B cell (primary cell): ENCODE measurements at regions of chrX and their contacts with region 1.

Region 1: GRCh38 chrX:72126539-72127140 is 5.1 kb downstream of the RTL5 start:
- DNase-seq: peak; percentile 80
- ATAC-seq: peak; percentile 62
- H3K4me3 ChIP-seq: no peak overlapping the region
- H3K4me3 Mint-ChIP-seq: no peak overlapping the region
- H3K27ac ChIP-seq: no peak overlapping the region
- H3K27ac Mint-ChIP-seq: peak overlapping the region; percentile 21
- H3K4me1 ChIP-seq: peaks cover 12 to 27% of the 10 kb centered on the region in 2 donors
- H3K4me1 Mint-ChIP-seq: peaks cover 34% of the 10 kb centered on the region
- H3K27me3 ChIP-seq: peaks cover 0 to 5% (median 2%) of the 10 kb centered on the region in 4 experiments
- H3K27me3 Mint-ChIP-seq: peaks cover 4% of the 10 kb centered on the region
- CTCF ChIP-seq: peak; percentile 70

Region 2: DNA sequence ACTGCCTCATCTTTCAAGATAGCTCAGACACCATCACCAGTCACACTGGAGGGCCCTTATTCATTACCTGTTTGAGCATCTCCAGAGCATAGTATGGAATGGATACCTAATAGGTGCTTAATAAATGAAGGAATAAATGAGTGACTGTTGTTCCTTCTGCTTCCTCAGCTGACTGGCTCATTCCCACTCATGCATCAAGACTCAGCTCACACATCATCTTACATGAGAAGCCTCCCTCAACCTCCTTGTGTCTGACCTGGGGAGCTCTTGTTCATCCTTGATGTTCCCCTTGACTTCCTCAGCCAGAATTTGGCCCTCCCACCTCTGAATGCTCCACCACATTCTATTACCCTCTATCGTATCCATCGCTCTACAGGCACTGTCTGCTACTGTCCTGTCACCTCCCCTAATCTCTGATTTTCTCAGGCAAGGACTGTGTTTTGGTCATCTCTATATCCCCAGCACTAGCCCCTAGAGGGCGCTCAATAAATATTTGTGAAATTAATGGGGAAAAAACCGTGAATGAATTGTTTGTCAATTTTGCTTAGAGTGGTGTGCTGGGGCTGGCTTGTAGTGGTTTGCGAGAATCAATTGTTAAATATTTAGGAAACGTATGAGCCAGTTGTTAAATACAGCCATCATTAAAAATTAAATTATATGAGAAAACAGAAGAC is 127.7 kb before region 1 on chrX:
- CTCF ChIA-PET with region 1: interaction called, 83 read pairs
- POLR2A ChIA-PET with region 1: interaction called, 3 read pairs
- intact Hi-C with region 1: loop called (anchors 1 kb)
- DNase-seq: peak; percentile 52
- ATAC-seq: peak; percentile 51
- H3K4me3 ChIP-seq: no peak overlapping the region
- H3K4me3 Mint-ChIP-seq: no peak overlapping the region
- H3K27ac ChIP-seq: no peak overlapping the region
- H3K27ac Mint-ChIP-seq: no peak overlapping the region
- H3K4me1 ChIP-seq: no peaks in the 10 kb centered on the region
- H3K4me1 Mint-ChIP-seq: no peaks in the 10 kb centered on the region
- H3K27me3 ChIP-seq: no peaks in the 10 kb centered on the region
- H3K27me3 Mint-ChIP-seq: peaks cover 3% of the 10 kb centered on the region
- CTCF ChIP-seq: peak; percentile 74

Region 3: GRCh38 chrX:72048968-72049367 is 77.7 kb before region 1 on chrX:
- CTCF ChIA-PET with region 1: interaction called, 6 read pairs
- POLR2A ChIA-PET with region 1: no interaction called
- intact Hi-C with region 1: loop called (anchors 1 kb)
- DNase-seq: peak; percentile 22
- ATAC-seq: no peak
- H3K4me3 ChIP-seq: no peak overlapping the region
- H3K4me3 Mint-ChIP-seq: no peak overlapping the region
- H3K27ac ChIP-seq: no peak overlapping the region
- H3K27ac Mint-ChIP-seq: no peak overlapping the region
- H3K4me1 ChIP-seq: no peaks in the 10 kb centered on the region
- H3K4me1 Mint-ChIP-seq: no peaks in the 10 kb centered on the region
- H3K27me3 ChIP-seq: no peaks in the 10 kb centered on the region
- H3K27me3 Mint-ChIP-seq: no peaks in the 10 kb centered on the region
- CTCF ChIP-seq: no peak

Region 4: DNA sequence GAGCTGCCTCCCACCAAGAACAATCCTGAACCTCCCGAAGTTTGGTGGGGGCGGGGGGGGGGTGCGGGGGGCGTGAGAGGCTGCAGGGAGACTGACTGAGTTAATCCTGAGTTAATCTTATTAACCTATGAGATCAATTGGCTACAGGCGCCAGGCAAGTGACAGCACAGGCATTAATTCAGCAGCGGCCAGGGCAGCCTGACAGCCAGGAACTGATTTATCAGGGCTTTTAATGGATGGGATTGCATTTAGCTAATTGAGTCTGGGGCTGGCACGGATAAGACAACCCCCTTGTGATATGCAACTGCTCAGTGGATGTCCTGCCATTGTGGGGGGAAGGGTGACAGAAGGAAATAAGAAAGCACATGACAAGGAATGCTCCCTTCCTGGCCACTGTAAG is 11.3 kb before region 1 on chrX:
- CTCF ChIA-PET with region 1: interaction called, 20 read pairs
- POLR2A ChIA-PET with region 1: no interaction called
- intact Hi-C with region 1: no loop called
- DNase-seq: no peak
- ATAC-seq: no peak
- H3K4me3 ChIP-seq: no peak overlapping the region
- H3K4me3 Mint-ChIP-seq: no peak overlapping the region
- H3K27ac ChIP-seq: no peak overlapping the region
- H3K27ac Mint-ChIP-seq: no peak overlapping the region
- H3K4me1 ChIP-seq: peaks cover 0 to 5% of the 10 kb centered on the region in 2 donors
- H3K4me1 Mint-ChIP-seq: peaks cover 3% of the 10 kb centered on the region
- H3K27me3 ChIP-seq: no peaks in the 10 kb centered on the region
- H3K27me3 Mint-ChIP-seq: peaks cover 11% of the 10 kb centered on the region
- CTCF ChIP-seq: no peak

Region 5: DNA sequence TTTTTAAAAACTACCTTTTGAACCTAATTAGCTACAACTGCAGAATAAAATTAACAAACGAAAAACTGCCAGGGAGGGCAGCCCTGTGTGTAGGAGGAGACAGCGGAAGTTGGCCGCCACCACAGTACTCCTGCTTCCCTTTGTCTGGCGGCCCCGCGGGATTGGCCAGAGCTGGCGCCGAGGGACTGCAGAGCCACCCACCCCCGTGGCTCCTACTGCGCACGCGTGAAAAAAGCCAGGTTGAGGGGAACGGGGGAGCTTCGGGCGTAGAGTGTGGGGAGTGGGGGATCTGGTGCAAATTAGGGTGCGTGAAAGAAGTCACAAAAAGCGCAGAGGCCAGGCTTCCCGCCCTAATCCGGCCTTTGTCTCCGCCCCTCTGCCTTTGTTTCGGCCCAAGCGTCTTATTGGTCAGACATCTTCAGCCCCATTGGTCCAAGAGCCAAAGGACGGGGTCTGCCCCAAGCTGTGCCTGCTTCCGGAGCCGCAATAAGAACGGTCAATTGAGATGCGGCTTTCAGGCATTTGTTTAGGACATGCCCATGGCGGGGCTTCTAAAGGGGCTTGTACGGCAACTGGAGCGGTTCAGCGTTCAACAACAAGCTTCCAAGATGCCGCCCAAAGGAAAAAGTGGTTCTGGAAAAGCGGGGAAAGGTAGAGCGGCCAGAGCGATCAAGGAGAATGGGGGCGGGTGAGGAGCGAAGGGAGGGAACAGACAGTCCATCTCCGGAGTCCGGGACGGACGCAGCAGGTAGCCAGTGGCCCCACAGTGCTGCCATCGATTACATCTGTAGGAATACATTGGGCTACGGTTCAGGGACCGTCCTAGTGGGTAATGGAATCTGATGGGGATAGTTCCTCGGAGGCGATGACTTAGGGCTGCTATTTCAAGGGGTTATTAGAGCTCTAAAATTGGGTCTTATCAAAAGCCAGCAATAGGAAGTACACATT is 54.8 kb after region 1 on chrX and contains the start of gene PIN4:
- CTCF ChIA-PET with region 1: interaction called, 9 read pairs
- POLR2A ChIA-PET with region 1: interaction called, 13 read pairs
- intact Hi-C with region 1: no loop called
- DNase-seq: peak; percentile 93
- ATAC-seq: peak; percentile 90
- H3K4me3 ChIP-seq: peak within 1 kb of the TSS; percentile 73 to 84 (median 80)
- H3K4me3 Mint-ChIP-seq: no peak within 1 kb of the TSS
- H3K27ac ChIP-seq: peak within 1 kb of the TSS; percentile 68 to 79
- H3K27ac Mint-ChIP-seq: no peak within 1 kb of the TSS
- H3K4me1 ChIP-seq: peaks cover 14 to 17% of the 10 kb centered on the region in 2 donors
- H3K4me1 Mint-ChIP-seq: peaks cover 15% of the 10 kb centered on the region
- H3K27me3 ChIP-seq: no peaks in the 10 kb centered on the region
- H3K27me3 Mint-ChIP-seq: no peaks in the 10 kb centered on the region
- CTCF ChIP-seq: no peak
- total RNA-seq, gene PIN4: 13.4 and 16.0 TPM in 2 replicates